ENCODE measurements at regions of chr3 and their contacts with region 1.

Region 1: DNA sequence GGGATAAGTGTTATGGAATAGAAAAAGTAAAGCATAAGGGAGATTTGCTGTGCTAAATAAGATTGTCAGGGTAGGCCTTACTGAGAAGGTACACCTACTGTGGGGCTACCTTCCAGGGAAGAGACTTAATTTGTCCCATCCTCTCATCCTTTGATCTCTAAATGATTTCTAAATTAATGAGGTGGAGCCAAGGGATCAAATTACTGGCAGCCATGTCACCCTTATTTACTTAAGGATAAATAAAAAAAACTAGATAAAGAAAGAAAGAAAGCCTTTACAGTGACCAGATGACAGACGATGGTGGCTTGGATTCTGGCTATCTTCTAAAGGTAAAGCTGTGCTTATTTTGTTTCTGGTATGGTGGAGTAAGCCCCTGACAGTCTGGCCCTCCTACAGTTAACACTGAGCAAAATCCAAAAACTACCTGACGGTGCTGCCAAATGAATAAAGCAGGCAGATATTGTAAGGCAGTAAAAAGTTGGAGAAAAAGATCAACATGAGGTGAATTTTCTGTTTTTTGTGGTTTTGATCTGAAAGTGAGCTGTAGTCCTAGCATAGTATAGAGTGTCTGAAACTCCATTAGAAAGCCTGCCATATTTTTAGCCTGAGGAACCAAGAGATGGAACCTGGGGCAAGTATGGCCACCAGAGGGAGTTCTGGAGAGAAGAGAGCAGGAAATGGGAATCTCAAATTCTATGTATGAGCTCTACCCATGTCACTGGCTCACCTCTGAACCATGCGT is 285.1 kb upstream of the MANF start:
- DNase-seq: peak; percentile 56
- ATAC-seq: peak; percentile 84
- H3K4me3 ChIP-seq: no peak overlapping the region
- H3K27ac ChIP-seq: no peak overlapping the region
- H3K4me1 ChIP-seq: peaks cover 3% of the 10 kb centered on the region
- H3K27me3 ChIP-seq: no peaks in the 10 kb centered on the region; a peak in 1 of 5 replicates
- CTCF ChIP-seq: peak; percentile 71
- EP300 ChIP-seq: no peak
- POLR2A ChIP-seq: no peak
- RAD21 ChIP-seq: peak; percentile 47; the same call in 1 of the 2 replicates

Region 2: GRCh38 chr3:50971487-50971924 is 128.5 kb before region 1 on chr3:
- CTCF ChIA-PET with region 1: interaction called, 3 read pairs
- POLR2A ChIA-PET with region 1: no interaction called
- in situ Hi-C with region 1: no loop called
- intact Hi-C with region 1: loop called (anchors 2 kb)
- DNase-seq: peak; percentile 68
- ATAC-seq: peak; percentile 94
- H3K4me3 ChIP-seq: no peak overlapping the region
- H3K27ac ChIP-seq: no peak overlapping the region
- H3K4me1 ChIP-seq: no peaks in the 10 kb centered on the region
- H3K27me3 ChIP-seq: no peaks in the 10 kb centered on the region
- CTCF ChIP-seq: peak; percentile 91
- EP300 ChIP-seq: no peak
- POLR2A ChIP-seq: no peak
- RAD21 ChIP-seq: peak; percentile 84

Region 3: GRCh38 chr3:51123531-51123930 is 23.6 kb after region 1 on chr3:
- CTCF ChIA-PET with region 1: no interaction called
- POLR2A ChIA-PET with region 1: no interaction called
- in situ Hi-C with region 1: no loop called
- intact Hi-C with region 1: no loop called
- DNase-seq: no peak
- ATAC-seq: no peak
- H3K4me3 ChIP-seq: no peak overlapping the region
- H3K27ac ChIP-seq: no peak overlapping the region
- H3K4me1 ChIP-seq: no peaks in the 10 kb centered on the region
- H3K27me3 ChIP-seq: no peaks in the 10 kb centered on the region; a peak in 1 of 5 replicates
- CTCF ChIP-seq: no peak
- EP300 ChIP-seq: no peak
- POLR2A ChIP-seq: no peak
- RAD21 ChIP-seq: no peak

Region 4: DNA sequence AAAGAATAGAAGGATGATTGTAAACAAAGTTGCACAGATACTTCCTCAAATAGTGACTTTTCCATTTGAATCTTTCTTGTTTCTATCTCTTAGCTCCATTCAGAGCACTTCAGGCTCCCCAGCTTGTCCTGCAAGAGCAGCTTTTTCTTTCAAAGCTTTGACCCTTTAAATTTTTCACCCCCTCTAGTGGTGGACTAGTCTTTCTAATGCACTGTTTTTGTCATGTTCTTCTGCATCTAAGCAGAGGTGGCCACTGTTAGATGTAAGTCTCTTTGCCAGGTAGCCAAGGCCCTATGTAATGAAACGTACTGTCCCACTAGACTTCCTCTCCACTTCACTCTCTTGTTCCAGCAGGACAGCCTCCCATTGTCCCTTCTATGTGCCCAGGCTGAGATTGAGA is 211.1 kb after region 1 on chr3:
- CTCF ChIA-PET with region 1: interaction called, 3 read pairs
- POLR2A ChIA-PET with region 1: no interaction called
- in situ Hi-C with region 1: no loop called
- intact Hi-C with region 1: loop called (anchors 1 kb)
- DNase-seq: peak; percentile 28
- ATAC-seq: peak; percentile 52; the same call in 2 of the 3 replicates
- H3K4me3 ChIP-seq: no peak overlapping the region
- H3K27ac ChIP-seq: no peak overlapping the region
- H3K4me1 ChIP-seq: no peaks in the 10 kb centered on the region
- H3K27me3 ChIP-seq: 0 out of 5 replicates have a peak, but pooled peaks cover 0 to 2% of the 10 kb centered on the region in 2 experiments
- CTCF ChIP-seq: peak; percentile 48
- EP300 ChIP-seq: no peak
- POLR2A ChIP-seq: no peak
- RAD21 ChIP-seq: no peak

Region 5: GRCh38 chr3:51371943-51372557 is 272.1 kb after region 1 on chr3:
- CTCF ChIA-PET with region 1: interaction called, 25 read pairs
- POLR2A ChIA-PET with region 1: no interaction called
- in situ Hi-C with region 1: loop called (anchors 10 kb)
- intact Hi-C with region 1: no loop called
- DNase-seq: peak; percentile 55
- ATAC-seq: peak; percentile 77
- H3K4me3 ChIP-seq: no peak overlapping the region
- H3K27ac ChIP-seq: no peak overlapping the region
- H3K4me1 ChIP-seq: no peaks in the 10 kb centered on the region
- H3K27me3 ChIP-seq: peaks cover 7 to 39% of the 10 kb centered on the region in 2 experiments; a peak in 4 of 5 replicates
- CTCF ChIP-seq: peak; percentile 79
- EP300 ChIP-seq: no peak
- POLR2A ChIP-seq: no peak
- RAD21 ChIP-seq: peak; percentile 78

Measured in HepG2 (cell line).